Common myeloid progenitor, CD34-positive (primary cell): ENCODE measurements at regions of chr1 and their contacts with region 1.

Region 1: GRCh38 chr1:192609110-192610079 is 26.6 kb upstream of the RGS13 start:
- DNase-seq: peak; percentile 92 to 99 (median 98)
- H3K4me3 ChIP-seq: no peak overlapping the region
- H3K27ac ChIP-seq: peak overlapping the region; percentile 70 to 78
- H3K4me1 ChIP-seq: peaks cover 11 to 32% (median 23%) of the 10 kb centered on the region in 4 experiments
- H3K27me3 ChIP-seq: no peaks in the 10 kb centered on the region

Region 2: DNA sequence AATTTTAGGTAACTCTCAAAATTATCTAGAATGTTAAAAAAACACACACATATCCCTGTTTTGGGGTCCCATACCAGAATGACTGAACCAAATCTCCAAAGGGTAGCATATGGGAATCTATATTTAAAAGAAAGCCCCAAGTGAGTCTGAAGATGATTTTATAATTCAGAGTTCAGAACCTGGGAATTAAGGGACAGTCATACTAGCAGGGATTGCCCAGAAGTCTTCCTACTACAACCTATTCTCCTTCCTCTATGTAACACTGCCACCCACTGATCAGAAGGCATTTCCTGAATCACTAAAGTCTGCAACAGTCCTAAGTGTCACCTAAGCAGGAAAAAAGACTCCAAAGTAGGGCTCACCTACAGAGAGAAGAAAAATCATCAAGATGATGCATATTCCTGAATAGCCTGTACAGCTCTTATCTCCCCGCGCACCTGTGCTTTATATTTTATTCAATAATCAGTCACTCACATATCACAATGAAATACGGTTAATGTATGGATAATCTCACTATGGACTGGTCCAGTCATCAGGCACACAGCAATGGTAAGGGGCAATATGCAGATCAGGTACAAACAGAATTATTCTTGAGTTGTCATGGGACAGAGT is 28.9 kb before region 1 on chr1:
- CTCF ChIA-PET with region 1: interaction called, 17 read pairs
- POLR2A ChIA-PET with region 1: interaction called, 7 read pairs
- DNase-seq: peak; percentile 50 to 59 (median 52)
- H3K4me3 ChIP-seq: no peak overlapping the region
- H3K27ac ChIP-seq: no peak overlapping the region
- H3K4me1 ChIP-seq: peaks cover 2 to 8% (median 6%) of the 10 kb centered on the region in 4 experiments
- H3K27me3 ChIP-seq: no peaks in the 10 kb centered on the region

Region 3: GRCh38 chr1:192627901-192628300 is 18.5 kb after region 1 on chr1:
- CTCF ChIA-PET with region 1: interaction called, 10 read pairs
- POLR2A ChIA-PET with region 1: no interaction called
- DNase-seq: no peak
- H3K4me3 ChIP-seq: no peak overlapping the region
- H3K27ac ChIP-seq: no peak overlapping the region
- H3K4me1 ChIP-seq: no peaks in the 10 kb centered on the region
- H3K27me3 ChIP-seq: no peaks in the 10 kb centered on the region

Region 4: GRCh38 chr1:192654591-192655251 is 45.3 kb after region 1 on chr1:
- CTCF ChIA-PET with region 1: no interaction called
- POLR2A ChIA-PET with region 1: no interaction called
- DNase-seq: no peak
- H3K4me3 ChIP-seq: no peak overlapping the region
- H3K27ac ChIP-seq: no peak overlapping the region
- H3K4me1 ChIP-seq: peaks cover 0 to 4% (median 0%) of the 10 kb centered on the region in 4 experiments
- H3K27me3 ChIP-seq: no peaks in the 10 kb centered on the region